WTC11 (cell line): ENCODE measurements at regions of chr9 and their contacts with region 1.

Region 1: DNA sequence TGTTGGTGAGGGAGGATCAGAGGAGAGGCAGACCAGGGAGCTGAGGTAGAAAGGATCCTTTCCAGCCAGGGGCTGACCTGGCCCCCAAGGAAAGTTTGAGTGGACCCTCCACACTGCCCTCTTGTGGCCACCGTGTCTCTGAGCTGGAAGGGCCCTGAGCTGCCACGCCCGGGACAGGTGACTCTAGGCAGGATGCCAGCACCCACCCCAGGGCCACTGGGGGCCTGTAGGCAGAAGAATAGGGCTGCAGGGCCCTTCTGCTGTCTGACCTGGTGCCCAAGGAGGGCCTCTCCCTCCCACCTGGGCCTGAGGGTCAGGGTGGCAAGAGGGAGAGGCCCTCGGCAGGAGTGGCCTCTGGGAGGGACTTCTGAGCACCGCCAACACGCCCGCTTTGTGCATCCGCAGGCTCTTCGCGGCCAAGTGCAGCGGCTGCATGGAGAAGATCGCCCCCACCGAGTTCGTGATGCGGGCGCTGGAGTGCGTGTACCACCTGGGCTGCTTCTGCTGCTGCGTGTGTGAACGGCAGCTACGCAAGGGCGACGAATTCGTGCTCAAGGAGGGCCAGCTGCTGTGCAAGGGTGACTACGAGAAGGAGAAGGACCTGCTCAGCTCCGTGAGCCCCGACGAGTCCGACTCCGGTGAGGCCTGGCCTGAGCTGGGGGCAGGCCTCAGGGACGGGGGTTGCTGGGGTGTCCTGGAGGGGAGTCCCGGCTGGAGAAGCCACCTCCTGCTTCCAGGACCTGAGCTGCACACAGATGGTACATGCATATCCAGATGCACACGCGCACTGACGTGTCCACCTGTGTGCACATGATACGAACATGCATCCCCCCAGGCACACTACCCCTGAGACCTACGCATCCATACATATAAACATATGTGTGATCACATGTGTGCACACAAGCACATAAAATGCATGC is 77.0 kb downstream of the LMX1B start:
- DNase-seq: peak; percentile 86
- ATAC-seq: peak; percentile 82
- H3K4me3 Mint-ChIP-seq: no peak overlapping the region
- H3K27ac Mint-ChIP-seq: no peak overlapping the region
- H3K4me1 Mint-ChIP-seq: peaks cover 19% of the 10 kb centered on the region
- H3K27me3 Mint-ChIP-seq: peaks cover 42% of the 10 kb centered on the region
- CTCF ChIP-seq: peak; percentile 80

Region 2: GRCh38 chr9:126587187-126588185 is 103.2 kb before region 1 on chr9:
- CTCF ChIA-PET with region 1: interaction called, 10 read pairs
- POLR2A ChIA-PET with region 1: no interaction called
- DNase-seq: peak; percentile 32
- ATAC-seq: peak; percentile 50
- H3K4me3 Mint-ChIP-seq: no peak overlapping the region
- H3K27ac Mint-ChIP-seq: no peak overlapping the region
- H3K4me1 Mint-ChIP-seq: peaks cover 19% of the 10 kb centered on the region
- H3K27me3 Mint-ChIP-seq: no peaks in the 10 kb centered on the region
- CTCF ChIP-seq: no peak

Region 3: GRCh38 chr9:126604059-126605055 is 86.3 kb before region 1 on chr9:
- CTCF ChIA-PET with region 1: interaction called, 19 read pairs
- POLR2A ChIA-PET with region 1: no interaction called
- DNase-seq: no peak
- ATAC-seq: no peak
- H3K4me3 Mint-ChIP-seq: no peak overlapping the region
- H3K27ac Mint-ChIP-seq: 0 out of 2 replicates have a peak overlapping the region, but pooled peaks have one; percentile 6
- H3K4me1 Mint-ChIP-seq: no peaks in the 10 kb centered on the region
- H3K27me3 Mint-ChIP-seq: peaks cover 39% of the 10 kb centered on the region
- CTCF ChIP-seq: no peak

Region 4: GRCh38 chr9:126619361-126620135 is 71.1 kb before region 1 on chr9:
- CTCF ChIA-PET with region 1: interaction called, 47 read pairs
- POLR2A ChIA-PET with region 1: no interaction called
- DNase-seq: no peak
- ATAC-seq: peak; percentile 3
- H3K4me3 Mint-ChIP-seq: peak overlapping the region; percentile 52
- H3K27ac Mint-ChIP-seq: no peak overlapping the region
- H3K4me1 Mint-ChIP-seq: peaks cover 80% of the 10 kb centered on the region
- H3K27me3 Mint-ChIP-seq: peaks cover 100% of the 10 kb centered on the region
- CTCF ChIP-seq: no peak

Region 5: GRCh38 chr9:126636983-126637798 is 53.5 kb before region 1 on chr9:
- CTCF ChIA-PET with region 1: interaction called, 83 read pairs
- POLR2A ChIA-PET with region 1: no interaction called
- DNase-seq: no peak
- ATAC-seq: no peak
- H3K4me3 Mint-ChIP-seq: peak overlapping the region; percentile 31; the same call in 1 of the 2 replicates
- H3K27ac Mint-ChIP-seq: no peak overlapping the region
- H3K4me1 Mint-ChIP-seq: peaks cover 26% of the 10 kb centered on the region
- H3K27me3 Mint-ChIP-seq: peaks cover 98% of the 10 kb centered on the region
- CTCF ChIP-seq: no peak

Region 6: GRCh38 chr9:126661521-126662220 is 29.0 kb before region 1 on chr9:
- CTCF ChIA-PET with region 1: interaction called, 76 read pairs
- POLR2A ChIA-PET with region 1: no interaction called
- DNase-seq: peak; percentile 80
- ATAC-seq: peak; percentile 82
- H3K4me3 Mint-ChIP-seq: no peak overlapping the region
- H3K27ac Mint-ChIP-seq: peak overlapping the region; percentile 7; the same call in 1 of the 2 replicates
- H3K4me1 Mint-ChIP-seq: peaks cover 43% of the 10 kb centered on the region
- H3K27me3 Mint-ChIP-seq: peaks cover 18% of the 10 kb centered on the region
- CTCF ChIP-seq: no peak

Region 7: GRCh38 chr9:126781186-126782052 is 90.7 kb after region 1 on chr9:
- CTCF ChIA-PET with region 1: interaction called, 36 read pairs
- POLR2A ChIA-PET with region 1: interaction called, 3 read pairs
- DNase-seq: peak; percentile 97
- ATAC-seq: peak; percentile 79
- H3K4me3 Mint-ChIP-seq: peak overlapping the region; percentile 27
- H3K27ac Mint-ChIP-seq: no peak overlapping the region
- H3K4me1 Mint-ChIP-seq: 0 out of 2 replicates have a peak, but pooled peaks cover 4% of the 10 kb centered on the region
- H3K27me3 Mint-ChIP-seq: peaks cover 9% of the 10 kb centered on the region; the same call in 1 of the 2 replicates
- CTCF ChIP-seq: peak; percentile 98

Region 8: DNA sequence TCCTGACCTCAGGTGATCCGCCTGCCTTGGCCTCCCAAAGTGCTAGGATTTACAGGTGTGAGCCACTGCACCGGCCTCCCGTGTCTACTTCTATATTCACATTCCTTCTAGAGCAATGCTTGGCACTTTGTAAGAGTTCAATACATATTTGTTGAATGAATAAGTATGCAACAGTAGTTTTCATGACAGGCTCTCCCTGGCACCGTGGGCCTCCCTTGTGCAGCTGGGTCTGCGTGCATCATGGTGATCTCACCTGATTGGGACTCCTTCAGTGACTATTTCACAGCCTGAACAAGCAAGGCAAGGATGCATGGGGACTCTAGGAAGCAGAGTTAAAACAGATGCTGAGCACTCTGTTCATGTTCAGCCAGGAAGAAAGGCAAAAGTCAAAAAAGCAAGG is 163.0 kb after region 1 on chr9:
- CTCF ChIA-PET with region 1: no interaction called
- POLR2A ChIA-PET with region 1: no interaction called
- DNase-seq: no peak
- ATAC-seq: no peak
- H3K4me3 Mint-ChIP-seq: no peak overlapping the region
- H3K27ac Mint-ChIP-seq: no peak overlapping the region
- H3K4me1 Mint-ChIP-seq: peaks cover 10% of the 10 kb centered on the region
- H3K27me3 Mint-ChIP-seq: peaks cover 24% of the 10 kb centered on the region
- CTCF ChIP-seq: no peak